Ascending aorta (tissue), 2 donors: ENCODE measurements at regions of chr17 and their contacts with region 1.

Region 1: DNA sequence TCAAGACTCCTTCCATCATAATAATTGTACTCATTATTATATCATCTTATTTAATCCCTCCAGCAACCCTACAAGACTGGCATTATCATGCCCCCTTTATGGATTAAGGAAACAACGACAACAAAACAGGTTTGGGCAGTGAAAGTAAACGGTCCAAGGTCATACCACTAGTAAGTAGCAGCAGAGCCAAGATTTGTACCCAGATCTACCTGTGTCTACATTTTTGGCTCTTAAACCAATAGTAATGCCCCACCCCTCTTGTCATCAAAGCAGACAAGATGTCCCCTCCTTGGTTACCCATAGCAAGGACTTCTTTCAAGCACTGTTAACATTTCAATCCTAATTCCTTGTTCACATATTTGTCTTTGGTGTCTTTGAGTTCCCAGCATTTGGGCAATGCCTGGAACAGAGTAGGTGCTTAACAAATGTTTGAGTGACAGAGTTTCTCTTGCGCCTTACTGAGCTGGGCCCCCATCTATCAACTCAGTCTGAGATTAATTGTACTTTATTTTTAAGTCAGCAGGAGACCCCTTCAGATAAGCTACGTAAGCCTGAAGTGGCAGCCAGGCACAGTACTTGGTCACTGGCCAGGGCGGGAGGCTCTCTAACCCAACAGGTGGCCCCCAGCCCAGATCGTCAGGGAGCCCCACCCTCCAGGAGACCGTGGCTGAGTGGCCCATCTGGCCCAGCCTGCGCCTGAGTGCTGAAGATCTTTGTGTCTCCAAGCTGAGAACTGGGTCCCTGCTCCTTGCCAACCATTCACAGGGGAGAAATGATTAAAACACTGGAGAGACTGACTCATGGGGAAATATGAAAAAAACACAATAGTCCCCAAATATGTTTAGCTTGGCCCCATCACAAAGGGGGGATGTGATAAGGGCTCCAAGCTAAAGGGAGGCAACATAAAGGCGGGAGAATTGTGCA is 75.8 kb downstream of the AXIN2 start:
- DNase-seq: peak; percentile 69 to 93
- H3K4me3 ChIP-seq: no peak overlapping the region
- H3K27ac ChIP-seq: peak overlapping the region; percentile 87 to 91
- H3K4me1 ChIP-seq: peaks cover 4 to 12% of the 10 kb centered on the region in 2 donors
- H3K27me3 ChIP-seq: no peaks in the 10 kb centered on the region
- CTCF ChIP-seq: no peak

Region 2: DNA sequence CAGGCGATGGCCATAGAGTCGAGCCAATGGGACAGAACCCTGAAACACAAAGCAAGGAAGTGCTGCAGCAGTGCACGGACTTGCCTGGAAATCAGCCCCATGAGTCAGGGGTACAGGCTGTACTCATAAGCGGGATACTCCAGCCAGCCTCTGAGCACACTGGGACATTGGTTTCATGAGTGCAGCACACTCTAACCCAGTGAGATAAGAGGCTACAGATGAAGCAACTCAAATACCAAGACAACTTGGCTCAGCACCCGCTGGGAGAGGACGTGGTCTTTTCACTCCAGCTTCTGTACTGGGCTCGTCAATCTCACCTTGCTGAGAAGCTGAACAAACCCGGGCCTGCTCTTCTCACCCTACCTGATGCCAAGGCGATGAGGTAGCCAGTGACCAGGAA is 22.4 kb before region 1 on chr17:
- intact Hi-C with region 1: loop called (anchors 1 kb)
- DNase-seq: peak; percentile 71 to 93
- H3K4me3 ChIP-seq: no peak overlapping the region
- H3K27ac ChIP-seq: peak overlapping the region; percentile 68 to 73
- H3K4me1 ChIP-seq: peaks cover 4 to 18% of the 10 kb centered on the region in 2 donors
- H3K27me3 ChIP-seq: no peaks in the 10 kb centered on the region
- CTCF ChIP-seq: no peak

Region 3: DNA sequence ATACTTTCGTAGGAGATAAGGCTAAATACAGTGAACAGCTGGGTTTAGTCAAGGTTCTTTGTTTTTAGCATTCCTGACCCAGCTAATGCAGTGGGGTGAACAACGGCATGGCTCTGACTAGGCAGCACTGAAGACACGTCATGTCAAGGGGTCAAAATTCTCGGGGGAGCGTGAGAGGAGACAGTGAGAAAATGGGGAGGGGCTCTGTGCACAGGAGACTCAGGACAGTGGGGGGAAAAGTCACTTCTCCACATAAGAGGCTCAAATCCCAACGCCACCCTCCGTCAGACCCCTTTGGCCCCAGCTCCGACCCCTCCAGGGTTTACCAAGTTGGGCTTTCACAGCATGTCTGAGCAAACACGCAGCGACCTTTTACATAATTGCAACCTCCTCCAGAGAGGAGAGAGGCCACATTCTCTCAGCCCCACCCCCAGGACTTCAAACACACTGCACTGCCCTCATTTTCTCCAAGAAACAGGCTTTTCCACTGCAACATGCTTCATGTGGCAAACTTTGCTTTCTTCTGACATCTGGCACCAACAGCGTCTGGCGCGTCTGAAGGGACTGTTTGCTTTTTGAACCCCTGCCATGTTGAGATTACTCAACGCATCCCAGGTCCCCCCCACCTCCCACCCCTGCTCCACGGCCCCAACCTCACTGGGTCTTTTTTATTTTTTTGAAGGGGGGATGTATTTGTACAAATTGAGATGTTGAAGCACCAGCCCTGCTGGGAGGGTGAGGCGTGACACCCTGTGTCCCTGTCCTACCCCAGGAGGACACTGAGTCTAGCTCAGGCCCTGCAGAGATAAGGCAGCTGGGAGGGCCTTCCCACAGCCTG is 45.8 kb after region 1 on chr17:
- intact Hi-C with region 1: loop called (anchors 5 kb)
- DNase-seq: no peak
- H3K4me3 ChIP-seq: peak overlapping the region in 1 of 2 donors; percentile 16
- H3K27ac ChIP-seq: peak overlapping the region; percentile 57 to 69
- H3K4me1 ChIP-seq: peaks cover 9 to 41% of the 10 kb centered on the region in 2 donors
- H3K27me3 ChIP-seq: no peaks in the 10 kb centered on the region
- CTCF ChIP-seq: peak in 2 of 3 experiments; percentile 29 to 32

Region 4: DNA sequence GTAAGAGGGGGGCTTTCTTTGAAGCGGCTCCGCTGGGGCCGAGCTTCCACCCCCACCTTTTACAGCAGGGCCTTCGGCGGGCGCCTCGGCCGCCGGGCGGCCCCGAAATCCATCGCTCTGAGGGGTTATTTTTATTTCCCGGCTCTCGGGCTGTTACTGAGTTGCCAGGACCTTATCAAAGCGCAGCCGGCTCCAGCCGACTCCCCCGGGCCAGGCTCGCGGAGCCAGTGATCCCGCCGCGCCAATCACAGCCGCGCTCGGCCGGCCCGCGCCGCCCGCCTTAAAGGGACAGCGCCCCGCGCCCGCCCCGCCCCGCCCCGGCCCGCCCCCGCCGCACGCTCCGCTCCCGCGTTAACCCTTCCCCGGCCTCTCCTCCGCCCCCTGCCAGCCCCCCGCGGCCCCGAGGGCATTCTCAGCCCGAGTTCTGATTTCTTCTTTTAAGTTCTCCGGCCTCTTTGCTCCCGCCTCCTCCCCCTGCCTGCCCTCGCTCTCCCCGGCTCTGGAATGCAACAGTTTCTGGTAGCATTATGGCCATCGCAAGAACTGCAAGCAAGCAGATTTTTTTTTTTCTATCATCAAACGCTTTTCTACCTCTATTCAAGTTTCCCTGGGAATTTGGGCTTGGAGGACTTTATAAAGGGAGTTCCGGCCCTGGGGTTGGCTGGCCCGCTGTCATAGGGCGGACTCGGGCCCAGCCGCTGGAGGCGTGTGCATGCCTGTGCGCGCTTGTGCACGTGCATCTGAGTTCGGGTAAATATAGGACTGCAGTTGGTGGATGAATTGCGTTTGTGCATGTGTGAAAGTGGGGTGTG is 76.0 kb after region 1 on chr17 and contains the start of gene AXIN2:
- intact Hi-C with region 1: loop called (anchors 2 kb)
- DNase-seq: peak; percentile 59 to 94
- H3K4me3 ChIP-seq: peak within 1 kb of the TSS in 1 of 2 donors; percentile 97
- H3K27ac ChIP-seq: peak within 1 kb of the TSS; percentile 90 to 94
- H3K4me1 ChIP-seq: peaks cover 0 to 11% of the 10 kb centered on the region in 2 donors
- H3K27me3 ChIP-seq: no peaks in the 10 kb centered on the region
- CTCF ChIP-seq: peak; percentile 11 to 32 (median 12)
- total RNA-seq, gene AXIN2: 27.5 TPM

Region 5: GRCh38 chr17:67366193-67367157 is 1880.8 kb after region 1 on chr17 and contains the start of gene PSMD12:
- intact Hi-C with region 1: no loop called
- DNase-seq: peak; percentile 74 to 96
- H3K4me3 ChIP-seq: peak within 1 kb of the TSS; percentile 90 to 96
- H3K27ac ChIP-seq: peak within 1 kb of the TSS; percentile 89 to 96
- H3K4me1 ChIP-seq: peaks cover 5 to 20% of the 10 kb centered on the region in 2 donors
- H3K27me3 ChIP-seq: no peaks in the 10 kb centered on the region
- CTCF ChIP-seq: peak in 1 of 3 experiments; percentile 7
- total RNA-seq, gene PSMD12: 31.8 TPM